ENCODE measurements at regions of chr9 and their contacts with region 1.

Region 1: GRCh38 chr9:136400038-136400834 is at the start of gene SNAPC4:
- DNase-seq: peak; percentile 84 to 90 (median 88)
- H3K4me3 ChIP-seq: peak within 1 kb of the TSS; percentile 64 to 87 (median 77)
- H3K27ac ChIP-seq: peak within 1 kb of the TSS in 1 of 2 experiments; percentile 63
- H3K4me1 ChIP-seq: peaks cover 0 to 22% (median 20%) of the 10 kb centered on the region in 4 experiments
- H3K27me3 ChIP-seq: no peaks in the 10 kb centered on the region

Region 2: DNA sequence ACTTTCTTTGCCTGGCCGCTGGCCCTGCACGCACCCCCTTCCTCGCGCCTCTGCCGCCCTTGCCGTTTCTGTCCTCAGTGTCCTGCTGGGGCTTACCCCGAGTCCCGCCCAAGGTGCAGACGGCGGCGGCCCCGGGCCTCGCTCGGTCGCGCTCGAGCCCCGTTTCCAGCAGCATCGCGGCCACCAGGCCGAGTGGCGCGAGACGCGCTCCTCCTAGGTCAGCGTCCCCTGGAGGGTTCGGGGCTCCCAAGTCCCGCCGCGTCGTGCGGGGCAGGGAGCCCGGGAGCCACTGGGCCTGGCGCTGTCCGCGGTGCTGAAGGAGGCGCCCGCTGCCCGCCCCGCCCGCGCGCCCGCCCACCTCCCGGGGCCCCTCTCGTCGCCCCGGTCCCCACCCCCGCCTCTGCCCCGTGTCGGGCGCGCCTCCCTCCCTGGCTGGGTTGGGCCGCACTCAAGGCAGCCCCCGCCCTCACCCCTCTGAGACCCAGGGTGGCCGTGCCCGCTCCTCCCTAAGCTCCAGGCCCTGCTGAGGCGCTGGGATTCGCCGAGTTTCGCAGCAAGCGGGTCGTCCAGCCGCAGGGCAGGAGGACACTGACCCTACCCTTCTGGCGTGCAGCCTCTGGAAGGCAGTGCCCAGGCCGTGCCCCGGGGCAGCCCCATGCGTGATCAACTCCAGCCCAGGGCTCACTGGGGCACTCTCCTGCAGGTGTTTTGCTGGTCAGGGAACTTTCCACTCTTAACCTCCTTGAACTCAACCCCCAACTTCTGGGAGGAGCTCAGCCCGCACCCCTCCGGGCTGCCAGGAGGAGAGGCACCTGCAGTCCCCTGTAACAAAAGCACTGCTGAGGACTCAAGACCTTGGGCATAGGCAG is 195.2 kb before region 1 on chr9 and contains the start of gene LHX3:
- CTCF ChIA-PET with region 1: no interaction called
- POLR2A ChIA-PET with region 1: no interaction called
- DNase-seq: peak; percentile 11 to 56 (median 42)
- H3K4me3 ChIP-seq: no peak within 1 kb of the TSS
- H3K27ac ChIP-seq: no peak within 1 kb of the TSS
- H3K4me1 ChIP-seq: no peaks in the 10 kb centered on the region
- H3K27me3 ChIP-seq: peaks cover 0 to 57% (median 33%) of the 10 kb centered on the region in 5 experiments

Region 3: GRCh38 chr9:136363606-136364370 is 36.4 kb before region 1 on chr9 and contains the start of gene DNLZ:
- CTCF ChIA-PET with region 1: interaction called, 22 read pairs
- POLR2A ChIA-PET with region 1: interaction called, 4 read pairs
- DNase-seq: peak; percentile 84 to 92 (median 88)
- H3K4me3 ChIP-seq: peak within 1 kb of the TSS; percentile 63 to 89 (median 80)
- H3K27ac ChIP-seq: peak within 1 kb of the TSS in 1 of 2 experiments; percentile 43
- H3K4me1 ChIP-seq: peaks cover 0 to 28% (median 19%) of the 10 kb centered on the region in 4 experiments
- H3K27me3 ChIP-seq: peaks cover 0 to 3% (median 0%) of the 10 kb centered on the region in 5 experiments